Cardiac septum (tissue), 1 donor: ENCODE measurements at regions of chr10 and their contacts with region 1.

Region 1: GRCh38 chr10:38094158-38094920 is at the start of gene ZNF37A:
- DNase-seq: peak; percentile 97
- total RNA-seq, gene ZNF37A: 9.4 TPM

Region 2: DNA sequence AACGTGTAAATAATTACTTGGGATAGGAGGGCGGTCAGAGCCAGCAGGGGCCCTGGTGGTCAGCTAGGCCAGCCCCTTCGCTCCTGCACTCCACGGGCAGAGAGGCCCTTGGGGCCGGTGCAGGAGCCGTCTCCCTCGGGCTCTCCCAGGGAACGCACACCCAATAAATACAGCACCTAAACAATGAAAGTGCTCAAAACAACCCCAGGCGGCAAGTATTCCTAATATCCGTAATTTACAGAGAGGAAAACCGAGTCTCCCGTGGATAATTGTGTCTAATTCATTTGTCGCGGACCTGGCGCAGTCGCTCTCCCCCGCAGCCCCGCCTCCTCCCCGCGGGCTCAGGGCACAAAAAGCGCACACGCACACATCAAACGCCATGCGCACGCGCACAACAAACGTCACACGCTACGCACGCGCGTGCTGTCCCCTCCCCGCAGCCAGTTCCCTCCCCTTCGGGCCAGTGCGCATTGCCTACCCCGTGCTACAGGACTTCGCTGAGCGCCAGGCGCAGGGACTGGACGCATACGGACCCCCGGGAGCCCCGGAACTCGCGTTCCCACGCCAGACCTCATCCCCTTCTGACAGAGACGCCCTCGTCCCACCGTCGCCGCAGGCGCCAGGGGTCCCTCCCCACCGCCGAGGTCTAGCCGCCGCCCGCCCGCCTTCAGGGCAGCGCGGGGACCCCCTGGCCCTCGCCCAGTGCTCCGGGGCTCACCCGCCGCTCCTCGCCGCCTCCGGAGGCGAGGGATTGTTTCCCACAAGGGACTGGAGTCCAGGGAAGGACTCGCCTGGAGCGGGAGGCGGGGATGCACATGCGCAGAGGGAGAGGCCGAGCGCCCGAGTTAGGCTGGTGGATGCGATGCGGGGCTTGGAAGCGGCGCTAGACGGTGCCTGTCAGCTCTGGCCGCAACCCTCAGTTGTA is 236.8 kb before region 1 on chr10 and contains the start of gene ZNF248:
- intact Hi-C with region 1: loop called (anchors 1 kb)
- DNase-seq: peak; percentile 98
- total RNA-seq, gene ZNF248: 10.8 TPM

Region 3: DNA sequence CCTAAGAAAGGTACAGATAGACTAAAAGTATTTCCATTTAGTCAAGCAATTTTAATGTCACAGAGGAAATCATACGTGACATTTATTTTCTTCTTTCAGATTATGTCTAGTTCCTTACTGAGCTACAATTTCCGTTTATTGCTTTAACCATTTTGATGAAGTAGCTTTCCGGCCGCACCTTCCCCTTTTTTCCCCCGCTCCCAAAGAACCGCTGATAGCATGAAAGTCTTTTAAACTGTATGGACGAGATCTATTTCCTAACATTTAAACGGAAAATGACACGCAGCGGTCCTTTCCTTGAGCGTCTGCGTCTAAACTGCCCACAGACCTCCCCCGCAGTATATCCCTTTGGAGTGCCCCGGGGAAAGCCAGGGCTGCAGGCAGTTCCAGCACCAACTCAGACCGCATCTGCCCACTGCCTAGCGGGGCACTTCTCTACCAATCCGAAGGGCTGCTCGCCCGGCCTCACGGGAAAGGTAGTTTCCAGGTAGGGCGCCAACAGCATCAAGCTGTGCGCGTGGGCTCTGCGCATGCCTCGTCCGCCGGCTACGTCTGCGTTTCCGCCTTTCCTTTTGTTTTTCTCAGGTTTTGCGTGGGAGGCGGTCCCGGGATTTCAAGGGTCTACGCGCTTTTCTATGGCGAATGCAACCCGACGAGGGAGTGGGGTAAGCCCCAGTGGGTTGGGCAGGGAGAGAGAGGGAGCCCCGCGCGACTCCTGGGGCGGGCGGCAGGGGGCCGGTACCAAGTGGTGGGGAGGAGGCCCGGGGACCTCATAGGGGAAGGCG is 84.0 kb before region 1 on chr10 and contains the start of gene ZNF33A:
- intact Hi-C with region 1: loop called (anchors 2 kb)
- DNase-seq: peak; percentile 95
- total RNA-seq, gene ZNF33A: 18.7 TPM

Region 4: GRCh38 chr10:38076687-38077086 is 17.7 kb before region 1 on chr10:
- intact Hi-C with region 1: no loop called
- DNase-seq: no peak